ENCODE measurements at regions of chr9 and their contacts with region 1.

Region 1: DNA sequence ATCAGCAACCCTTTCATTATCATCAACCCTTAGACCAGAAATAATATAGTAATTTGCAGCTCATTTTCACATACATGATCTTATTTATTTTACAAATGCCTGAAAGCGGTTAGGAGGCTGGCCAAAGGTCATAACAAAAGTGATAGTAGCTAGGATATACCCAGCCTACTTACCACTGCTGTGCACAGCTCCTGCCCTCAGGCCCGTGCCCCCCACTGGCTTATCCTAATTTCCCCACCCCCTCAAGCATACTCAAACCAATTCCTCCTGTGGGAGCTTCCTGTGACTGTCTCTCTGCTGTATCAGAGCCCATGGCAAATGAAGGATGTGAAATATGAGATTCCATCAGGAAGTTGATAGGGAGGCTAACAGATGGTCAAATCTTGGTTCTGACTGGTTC is 14.8 kb downstream of the FAM219A start:
- DNase-seq: no peak

Region 2: GRCh38 chr9:33329117-33329563 is 1114.4 kb before region 1 on chr9:
- intact Hi-C with region 1: no loop called
- DNase-seq: no peak

Region 3: GRCh38 chr9:34493972-34494535 is 50.5 kb after region 1 on chr9:
- intact Hi-C with region 1: loop called in 1 of 2 experiments (anchors 5 kb)
- DNase-seq: no peak

Measured in posterior vena cava (tissue), 2 donors.